Common myeloid progenitor, CD34-positive (primary cell): ENCODE measurements at regions of chr17 and their contacts with region 1.

Region 1: DNA sequence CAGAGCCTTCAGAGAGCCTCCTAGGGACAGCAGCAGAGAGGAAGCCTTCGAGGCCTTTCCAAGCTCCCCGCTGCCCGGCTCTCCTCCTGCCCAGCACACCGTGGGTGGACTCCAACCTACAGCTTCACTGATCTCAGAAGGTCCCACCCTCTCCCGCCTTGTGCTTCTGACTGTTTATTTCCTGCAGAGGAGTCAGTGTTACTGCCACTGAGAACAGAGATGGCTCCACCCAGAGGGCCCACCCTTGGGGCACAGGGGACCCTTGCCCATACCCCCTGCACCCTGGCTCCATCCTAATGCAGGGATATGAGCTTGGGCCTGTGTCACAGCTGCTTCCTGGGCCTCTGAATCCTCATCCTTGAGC is 52.8 kb upstream of the TOB1 start:
- DNase-seq: peak in 1 of 3 donors; percentile 22
- H3K4me3 ChIP-seq: no peak overlapping the region
- H3K27ac ChIP-seq: no peak overlapping the region
- H3K4me1 ChIP-seq: peaks cover 3 to 54% (median 47%) of the 10 kb centered on the region in 4 experiments
- H3K27me3 ChIP-seq: peaks cover 0 to 4% (median 0%) of the 10 kb centered on the region in 5 experiments

Region 2: DNA sequence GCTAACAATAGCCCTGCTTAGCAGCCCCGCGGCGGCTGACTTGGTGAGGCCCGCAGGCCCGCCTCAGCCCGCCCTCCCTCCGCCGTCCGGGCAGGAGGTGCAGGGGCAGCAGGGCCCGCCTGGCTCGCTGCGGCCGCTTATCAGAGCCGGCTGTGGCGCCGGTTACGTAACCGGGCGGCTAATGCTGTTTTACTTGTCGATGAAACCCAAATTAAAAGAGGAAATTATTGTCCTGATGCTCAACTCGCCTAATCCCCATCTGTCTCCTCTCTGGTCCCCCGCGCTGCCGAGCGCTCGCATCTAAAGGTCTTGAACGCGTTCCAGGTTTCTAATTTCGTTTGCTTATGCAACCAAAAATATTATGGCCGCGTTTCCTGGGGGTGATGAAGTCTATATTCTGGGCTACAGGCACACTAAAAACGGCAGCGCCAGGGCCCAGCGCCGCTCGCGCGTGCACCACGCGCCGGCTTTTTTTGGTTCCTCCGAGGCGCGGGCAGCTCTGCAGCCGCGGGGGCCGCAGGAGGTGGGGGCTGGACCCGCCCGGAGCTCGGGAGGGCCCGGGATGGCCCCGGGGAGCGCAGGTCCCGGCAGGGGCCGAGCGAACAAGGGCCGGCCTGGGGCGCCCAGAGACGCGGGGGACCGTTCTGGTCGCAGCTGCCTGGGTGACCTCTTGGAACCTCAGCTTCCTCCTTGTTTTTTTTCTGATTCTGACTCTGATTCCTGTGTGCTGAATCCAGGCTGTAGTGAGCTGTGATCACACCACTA is 12.4 kb after region 1 on chr17:
- CTCF ChIA-PET with region 1: interaction called, 14 read pairs
- POLR2A ChIA-PET with region 1: no interaction called
- DNase-seq: peak; percentile 79 to 92 (median 86)
- H3K4me3 ChIP-seq: peak overlapping the region; percentile 13 to 60 (median 47)
- H3K27ac ChIP-seq: no peak overlapping the region
- H3K4me1 ChIP-seq: peaks cover 2 to 45% (median 32%) of the 10 kb centered on the region in 4 experiments
- H3K27me3 ChIP-seq: no peaks in the 10 kb centered on the region